ENCODE measurements at regions of chr13 and their contacts with region 1.

Region 1: GRCh38 chr13:41132512-41133152 is at the start of gene KBTBD6:
- DNase-seq: peak; percentile 80 to 96 (median 90)
- ATAC-seq: peak; percentile 95
- H3K4me3 ChIP-seq: peak within 1 kb of the TSS; percentile 70 to 80
- H3K4me3 Mint-ChIP-seq: peak within 1 kb of the TSS; percentile 95
- H3K27ac ChIP-seq: peak within 1 kb of the TSS; percentile 48 to 64
- H3K27ac Mint-ChIP-seq: peak within 1 kb of the TSS; percentile 93
- H3K4me1 ChIP-seq: peaks cover 43% of the 10 kb centered on the region
- H3K4me1 Mint-ChIP-seq: peaks cover 55% of the 10 kb centered on the region
- H3K27me3 ChIP-seq: no peaks in the 10 kb centered on the region
- H3K27me3 Mint-ChIP-seq: no peaks in the 10 kb centered on the region
- CTCF ChIP-seq: no peak
- total RNA-seq, gene KBTBD6: 2.2 to 2.3 TPM

Region 2: DNA sequence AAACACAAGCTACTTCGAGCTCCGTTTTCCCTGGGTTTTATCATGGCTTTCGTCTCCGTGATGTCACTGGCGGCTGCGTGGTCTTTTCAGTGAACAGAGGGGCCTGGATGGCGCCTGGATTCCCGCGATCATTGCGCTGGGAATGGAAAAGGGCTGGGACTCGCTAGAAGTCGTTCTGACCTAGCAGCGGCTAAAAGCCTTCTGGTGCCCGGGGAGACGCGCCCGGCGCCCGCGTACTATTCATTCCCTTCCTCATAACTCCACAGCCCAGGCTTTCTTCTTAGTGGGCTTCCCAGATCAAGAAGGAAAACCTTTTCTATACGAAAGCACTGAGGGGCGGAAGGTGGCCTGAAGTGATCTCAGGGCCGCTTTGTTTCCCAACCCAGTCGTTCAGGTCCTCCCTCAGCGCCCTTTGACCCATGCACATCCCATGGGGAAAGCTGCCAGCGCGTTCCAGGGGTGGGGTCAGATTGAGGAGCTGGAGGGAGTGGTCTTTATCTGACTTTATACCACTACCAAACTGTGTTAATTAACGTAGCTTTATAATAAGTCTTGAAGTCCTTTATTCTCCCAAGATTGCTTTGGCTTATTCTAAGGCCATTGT is 210.1 kb before region 1 on chr13:
- CTCF ChIA-PET with region 1: no interaction called
- POLR2A ChIA-PET with region 1: no interaction called
- intact Hi-C with region 1: loop called (anchors 1 to 10 kb)
- DNase-seq: peak in 2 of 9 experiments; percentile 17 to 30
- ATAC-seq: no peak
- H3K4me3 ChIP-seq: no peak overlapping the region
- H3K4me3 Mint-ChIP-seq: peak overlapping the region; percentile 59
- H3K27ac ChIP-seq: no peak overlapping the region
- H3K27ac Mint-ChIP-seq: peak overlapping the region; percentile 82
- H3K4me1 ChIP-seq: peaks cover 8% of the 10 kb centered on the region
- H3K4me1 Mint-ChIP-seq: peaks cover 27% of the 10 kb centered on the region
- H3K27me3 ChIP-seq: no peaks in the 10 kb centered on the region
- H3K27me3 Mint-ChIP-seq: no peaks in the 10 kb centered on the region
- CTCF ChIP-seq: no peak

Region 3: DNA sequence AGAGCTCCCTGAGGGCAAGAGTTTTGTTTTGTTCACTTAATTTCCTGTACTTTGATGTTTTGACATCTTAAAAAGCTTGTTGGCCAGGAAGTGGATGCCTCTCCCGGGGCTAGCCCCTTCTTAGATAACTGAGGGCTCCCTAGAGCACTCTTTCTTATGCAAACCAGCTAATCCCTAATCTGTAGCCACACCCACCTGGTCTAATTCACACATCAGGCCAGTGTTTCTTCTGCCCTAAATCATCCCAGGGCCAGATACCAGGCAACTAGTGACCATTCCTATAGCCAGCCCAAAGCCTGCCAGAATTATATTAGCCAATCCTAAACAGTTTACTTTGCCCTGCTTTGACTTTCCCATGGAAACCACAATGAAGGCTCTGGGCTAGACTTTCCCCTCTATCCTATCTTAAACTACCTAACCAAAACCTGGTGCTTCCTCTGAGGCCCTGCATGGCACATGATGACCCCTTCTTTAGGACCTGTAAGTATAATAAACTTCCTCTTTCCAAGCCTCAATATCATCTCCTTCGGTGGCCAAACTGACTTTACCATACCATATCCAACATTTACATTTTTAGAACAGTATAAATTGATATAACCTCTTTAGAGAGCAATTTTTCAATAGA is 46.6 kb before region 1 on chr13:
- CTCF ChIA-PET with region 1: no interaction called
- POLR2A ChIA-PET with region 1: no interaction called
- intact Hi-C with region 1: no loop called
- DNase-seq: no peak
- ATAC-seq: no peak
- H3K4me3 ChIP-seq: no peak overlapping the region
- H3K4me3 Mint-ChIP-seq: no peak overlapping the region
- H3K27ac ChIP-seq: no peak overlapping the region
- H3K27ac Mint-ChIP-seq: peak overlapping the region; percentile 2
- H3K4me1 ChIP-seq: no peaks in the 10 kb centered on the region
- H3K4me1 Mint-ChIP-seq: peaks cover 5% of the 10 kb centered on the region
- H3K27me3 ChIP-seq: no peaks in the 10 kb centered on the region
- H3K27me3 Mint-ChIP-seq: no peaks in the 10 kb centered on the region
- CTCF ChIP-seq: no peak

Region 4: GRCh38 chr13:41111454-41111853 is 21.2 kb before region 1 on chr13:
- CTCF ChIA-PET with region 1: no interaction called
- POLR2A ChIA-PET with region 1: no interaction called
- intact Hi-C with region 1: no loop called
- DNase-seq: no peak
- ATAC-seq: no peak
- H3K4me3 ChIP-seq: no peak overlapping the region
- H3K4me3 Mint-ChIP-seq: no peak overlapping the region
- H3K27ac ChIP-seq: no peak overlapping the region
- H3K27ac Mint-ChIP-seq: no peak overlapping the region
- H3K4me1 ChIP-seq: no peaks in the 10 kb centered on the region
- H3K4me1 Mint-ChIP-seq: no peaks in the 10 kb centered on the region
- H3K27me3 ChIP-seq: no peaks in the 10 kb centered on the region
- H3K27me3 Mint-ChIP-seq: no peaks in the 10 kb centered on the region
- CTCF ChIP-seq: no peak

Region 5: GRCh38 chr13:41263261-41264027 is 130.8 kb after region 1 on chr13 and contains the start of gene MTRF1:
- CTCF ChIA-PET with region 1: no interaction called
- POLR2A ChIA-PET with region 1: no interaction called
- intact Hi-C with region 1: loop called (anchors 1 kb)
- DNase-seq: peak; percentile 65 to 91 (median 82)
- ATAC-seq: peak; percentile 90
- H3K4me3 ChIP-seq: peak within 1 kb of the TSS; percentile 68 to 72
- H3K4me3 Mint-ChIP-seq: peak within 1 kb of the TSS; percentile 99
- H3K27ac ChIP-seq: peak within 1 kb of the TSS; percentile 73 to 84
- H3K27ac Mint-ChIP-seq: peak within 1 kb of the TSS; percentile 99
- H3K4me1 ChIP-seq: peaks cover 26% of the 10 kb centered on the region
- H3K4me1 Mint-ChIP-seq: peaks cover 40% of the 10 kb centered on the region
- H3K27me3 ChIP-seq: no peaks in the 10 kb centered on the region
- H3K27me3 Mint-ChIP-seq: no peaks in the 10 kb centered on the region
- CTCF ChIP-seq: no peak
- total RNA-seq, gene MTRF1: 26.2 to 26.9 TPM

Region 6: DNA sequence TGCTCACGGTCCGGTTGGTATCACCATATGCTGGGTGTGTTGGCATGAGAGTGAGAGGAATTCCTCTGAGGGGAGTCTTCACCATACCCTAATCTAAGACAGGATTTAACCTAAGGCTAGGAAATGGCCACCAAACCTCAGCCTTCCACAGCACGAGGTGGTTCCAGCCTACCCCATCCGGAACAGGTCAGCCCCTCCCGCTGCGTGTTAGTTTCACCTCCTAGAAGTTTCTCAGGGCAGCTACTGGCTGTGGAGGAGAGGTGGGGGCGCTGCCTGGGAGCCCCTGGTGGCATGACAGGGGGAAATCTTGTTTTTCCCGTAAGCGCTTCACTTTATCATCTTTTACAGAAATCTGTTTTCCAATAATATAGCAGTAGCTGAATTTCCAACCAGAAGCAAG is 379.8 kb after region 1 on chr13:
- CTCF ChIA-PET with region 1: no interaction called
- POLR2A ChIA-PET with region 1: no interaction called
- intact Hi-C with region 1: no loop called
- DNase-seq: peak in 2 of 9 experiments; percentile 32 to 56
- ATAC-seq: no peak
- H3K4me3 ChIP-seq: no peak overlapping the region
- H3K4me3 Mint-ChIP-seq: no peak overlapping the region
- H3K27ac ChIP-seq: no peak overlapping the region
- H3K27ac Mint-ChIP-seq: no peak overlapping the region
- H3K4me1 ChIP-seq: no peaks in the 10 kb centered on the region
- H3K4me1 Mint-ChIP-seq: no peaks in the 10 kb centered on the region
- H3K27me3 ChIP-seq: no peaks in the 10 kb centered on the region
- H3K27me3 Mint-ChIP-seq: no peaks in the 10 kb centered on the region
- CTCF ChIP-seq: no peak

Region 7: DNA sequence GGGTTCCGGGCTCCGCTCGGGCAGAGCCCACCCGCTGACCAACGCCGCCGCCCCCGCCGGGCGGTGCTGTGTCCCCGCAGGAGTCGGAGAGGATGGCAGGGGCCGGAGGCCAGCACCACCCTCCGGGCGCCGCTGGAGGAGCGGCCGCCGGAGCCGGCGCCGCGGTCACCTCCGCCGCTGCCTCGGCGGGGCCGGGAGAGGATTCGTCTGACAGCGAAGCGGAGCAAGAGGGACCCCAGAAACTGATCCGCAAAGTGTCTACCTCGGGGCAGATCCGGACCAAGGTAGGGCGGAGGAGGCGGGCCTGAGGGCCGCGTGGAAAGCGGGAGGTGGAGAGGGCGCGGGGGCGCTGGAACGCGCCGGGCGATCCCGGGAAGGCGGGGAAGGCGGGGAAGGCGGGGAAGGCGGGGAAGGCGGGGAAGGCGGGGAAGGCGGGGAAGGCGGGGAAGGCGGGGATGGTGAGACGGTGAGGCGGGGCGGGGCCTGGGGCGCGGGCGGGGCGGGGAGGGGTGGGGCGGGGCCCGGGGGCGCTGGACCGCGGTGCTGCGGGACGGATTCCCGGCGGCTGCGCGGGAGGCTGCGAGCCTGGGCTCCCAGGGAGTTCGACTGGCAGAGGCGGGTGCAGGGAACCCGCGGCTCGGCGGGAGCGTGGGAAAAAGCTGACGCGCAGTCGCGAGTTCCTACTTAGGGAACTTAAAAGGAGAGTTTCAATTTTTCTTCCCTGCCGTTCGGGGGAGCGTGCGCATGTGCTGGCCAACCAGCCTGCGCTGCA is 916.2 kb after region 1 on chr13:
- CTCF ChIA-PET with region 1: no interaction called
- POLR2A ChIA-PET with region 1: no interaction called
- intact Hi-C with region 1: loop called in 1 of 2 experiments (anchors 2 kb)
- DNase-seq: peak; percentile 23 to 74 (median 60)
- ATAC-seq: peak; percentile 70
- H3K4me3 ChIP-seq: peak overlapping the region; percentile 80 to 83
- H3K4me3 Mint-ChIP-seq: peak overlapping the region; percentile 86
- H3K27ac ChIP-seq: peak overlapping the region in 1 of 2 experiments; percentile 20
- H3K27ac Mint-ChIP-seq: peak overlapping the region; percentile 60
- H3K4me1 ChIP-seq: peaks cover 10% of the 10 kb centered on the region
- H3K4me1 Mint-ChIP-seq: peaks cover 12% of the 10 kb centered on the region
- H3K27me3 ChIP-seq: no peaks in the 10 kb centered on the region
- H3K27me3 Mint-ChIP-seq: no peaks in the 10 kb centered on the region
- CTCF ChIP-seq: no peak

Measured in CD8-positive, alpha-beta T cell (primary cell).